ENCODE measurements at regions of chr7 and their contacts with region 1.

Region 1: DNA sequence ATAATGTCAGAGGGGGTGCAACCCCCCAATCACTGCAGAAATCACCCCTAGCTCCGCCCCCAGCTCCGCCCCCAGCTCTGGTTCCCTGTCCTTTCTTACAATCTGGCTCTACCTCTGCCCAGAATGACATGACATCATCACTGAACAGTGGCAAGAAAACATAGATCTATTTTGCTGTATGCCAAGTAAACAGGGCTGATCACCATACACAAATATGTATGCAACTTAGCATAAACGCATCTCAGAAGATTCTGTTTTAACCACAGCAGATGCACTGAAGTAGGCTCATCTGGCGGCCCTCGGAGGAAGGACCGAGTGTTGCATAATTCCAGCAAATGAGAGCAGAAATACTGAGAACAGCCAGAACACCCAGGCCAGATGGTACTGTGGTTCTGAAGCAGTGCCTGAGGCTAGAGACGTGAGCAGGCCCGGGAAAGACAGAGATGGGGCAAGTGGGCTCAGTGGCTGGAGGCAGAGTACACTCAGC is 293.3 kb upstream of the KLF14 start:
- DNase-seq: peak in 1 of 2 donors; percentile 44
- ATAC-seq: peak; percentile 38 to 63
- H3K4me3 ChIP-seq: no peak overlapping the region
- H3K27ac ChIP-seq: peak overlapping the region; percentile 24 to 56 (median 47)
- H3K4me1 ChIP-seq: peaks cover 96 to 98% of the 10 kb centered on the region in 2 donors
- H3K27me3 ChIP-seq: no peaks in the 10 kb centered on the region
- CTCF ChIP-seq: no peak
- POLR2A ChIP-seq: no peak

Region 2: GRCh38 chr7:130961128-130961601 is 66.2 kb before region 1 on chr7:
- in situ Hi-C with region 1: no loop called
- intact Hi-C with region 1: loop called (anchors 5 kb)
- DNase-seq: no peak
- ATAC-seq: peak in 1 of 2 donors; percentile 23
- H3K4me3 ChIP-seq: no peak overlapping the region
- H3K27ac ChIP-seq: peak overlapping the region; percentile 11 to 61 (median 30)
- H3K4me1 ChIP-seq: peaks cover 56 to 64% of the 10 kb centered on the region in 2 donors
- H3K27me3 ChIP-seq: no peaks in the 10 kb centered on the region
- CTCF ChIP-seq: no peak
- POLR2A ChIP-seq: no peak

Region 3: DNA sequence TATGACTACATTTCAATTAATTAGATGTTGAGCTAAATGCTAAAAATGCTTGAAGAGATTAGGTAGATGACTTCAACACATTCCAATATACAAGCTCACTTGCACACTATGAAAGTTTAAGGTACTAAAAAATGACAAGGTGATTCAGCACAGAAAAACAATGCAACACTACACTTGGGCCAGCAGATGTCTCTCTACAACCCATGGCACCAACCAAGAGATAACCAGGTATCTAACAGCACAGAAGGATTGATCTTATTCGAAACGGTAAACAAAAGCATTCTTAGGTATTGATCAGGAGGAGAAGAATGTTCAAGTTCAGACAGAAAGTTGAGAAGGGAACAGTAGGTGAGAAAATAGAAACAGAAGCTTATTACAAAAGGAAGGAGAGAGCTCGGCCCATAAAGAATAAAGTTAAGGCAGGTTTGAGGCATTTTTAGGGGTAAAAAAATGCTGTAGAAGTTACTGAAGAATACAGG is 45.1 kb before region 1 on chr7:
- in situ Hi-C with region 1: no loop called
- intact Hi-C with region 1: loop called (anchors 5 kb)
- DNase-seq: no peak
- ATAC-seq: peak in 1 of 2 donors; percentile 50
- H3K4me3 ChIP-seq: no peak overlapping the region
- H3K27ac ChIP-seq: peak overlapping the region; percentile 4 to 47 (median 34)
- H3K4me1 ChIP-seq: peaks cover 48 to 50% of the 10 kb centered on the region in 2 donors
- H3K27me3 ChIP-seq: no peaks in the 10 kb centered on the region
- CTCF ChIP-seq: peak in 4 of 5 experiments; percentile 28 to 56 (median 34)
- POLR2A ChIP-seq: no peak

Measured in gastrocnemius medialis (tissue), 4 donors.